ENCODE measurements at regions of chr17 and their contacts with region 1.

Region 1: DNA sequence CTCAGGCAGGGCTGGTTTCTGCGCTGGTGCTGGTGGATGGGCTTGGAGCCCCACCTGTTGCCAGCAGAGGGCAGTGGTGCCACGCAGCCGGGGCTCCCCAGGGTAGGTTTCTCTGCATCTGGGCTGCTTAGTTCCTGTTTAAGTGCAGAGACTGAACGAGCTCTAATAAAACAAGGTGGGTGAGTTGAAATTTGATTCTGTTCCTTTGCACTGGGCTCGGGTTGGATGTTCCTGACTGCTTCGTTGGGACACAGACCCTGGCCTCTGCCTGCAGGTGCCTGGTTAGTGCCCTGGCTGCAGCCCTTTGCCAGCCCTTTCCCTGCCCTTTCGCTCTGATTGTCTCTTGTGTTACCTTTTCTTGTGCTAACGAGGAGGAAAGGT is 30.0 kb downstream of the TBCD start:
- DNase-seq: peak; percentile 90
- H3K4me3 Mint-ChIP-seq: no peak overlapping the region
- H3K27ac Mint-ChIP-seq: no peak overlapping the region
- H3K4me1 Mint-ChIP-seq: peaks cover 12% of the 10 kb centered on the region
- H3K27me3 Mint-ChIP-seq: no peaks in the 10 kb centered on the region
- CTCF ChIP-seq: peak; percentile 92

Region 2: GRCh38 chr17:82568997-82569393 is 212.9 kb before region 1 on chr17:
- CTCF ChIA-PET with region 1: no interaction called
- intact Hi-C with region 1: no loop called
- DNase-seq: no peak
- H3K4me3 Mint-ChIP-seq: no peak overlapping the region
- H3K27ac Mint-ChIP-seq: no peak overlapping the region
- H3K4me1 Mint-ChIP-seq: peaks cover 17% of the 10 kb centered on the region
- H3K27me3 Mint-ChIP-seq: no peaks in the 10 kb centered on the region
- CTCF ChIP-seq: no peak

Region 3: DNA sequence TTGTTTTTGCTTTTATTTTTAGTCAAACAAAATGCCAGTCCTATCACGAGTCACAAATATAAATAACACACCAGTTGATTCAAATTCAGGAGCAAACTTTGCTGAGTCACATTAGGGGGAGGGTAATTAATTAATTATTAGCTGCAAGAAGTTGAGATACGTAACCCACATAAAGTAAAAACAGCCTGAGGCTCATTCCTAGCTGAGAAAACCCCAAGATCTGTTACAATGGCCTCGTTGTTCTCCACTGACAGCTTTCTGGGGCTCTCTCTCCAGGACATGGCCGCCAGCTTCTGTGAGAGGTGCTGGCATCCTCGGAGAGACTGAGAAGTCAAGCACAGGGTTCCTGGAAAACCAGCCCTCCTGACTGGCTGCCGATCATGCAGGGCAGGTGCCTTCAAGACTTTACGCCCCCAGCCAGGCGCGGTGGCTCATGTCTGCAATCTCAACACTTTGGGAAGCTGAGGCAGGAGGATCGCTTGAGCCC is 94.5 kb before region 1 on chr17:
- CTCF ChIA-PET with region 1: no interaction called
- intact Hi-C with region 1: no loop called
- DNase-seq: peak; percentile 76
- H3K4me3 Mint-ChIP-seq: peak overlapping the region; percentile 42
- H3K27ac Mint-ChIP-seq: peak overlapping the region; percentile 96
- H3K4me1 Mint-ChIP-seq: peaks cover 49% of the 10 kb centered on the region
- H3K27me3 Mint-ChIP-seq: no peaks in the 10 kb centered on the region
- CTCF ChIP-seq: no peak

Region 4: GRCh38 chr17:82888691-82889495 is 107.0 kb after region 1 on chr17:
- CTCF ChIA-PET with region 1: interaction called, 12 read pairs
- intact Hi-C with region 1: no loop called
- DNase-seq: peak; percentile 80
- H3K4me3 Mint-ChIP-seq: peak overlapping the region; percentile 55
- H3K27ac Mint-ChIP-seq: peak overlapping the region; percentile 95
- H3K4me1 Mint-ChIP-seq: peaks cover 49% of the 10 kb centered on the region
- H3K27me3 Mint-ChIP-seq: no peaks in the 10 kb centered on the region
- CTCF ChIP-seq: no peak

Region 5: DNA sequence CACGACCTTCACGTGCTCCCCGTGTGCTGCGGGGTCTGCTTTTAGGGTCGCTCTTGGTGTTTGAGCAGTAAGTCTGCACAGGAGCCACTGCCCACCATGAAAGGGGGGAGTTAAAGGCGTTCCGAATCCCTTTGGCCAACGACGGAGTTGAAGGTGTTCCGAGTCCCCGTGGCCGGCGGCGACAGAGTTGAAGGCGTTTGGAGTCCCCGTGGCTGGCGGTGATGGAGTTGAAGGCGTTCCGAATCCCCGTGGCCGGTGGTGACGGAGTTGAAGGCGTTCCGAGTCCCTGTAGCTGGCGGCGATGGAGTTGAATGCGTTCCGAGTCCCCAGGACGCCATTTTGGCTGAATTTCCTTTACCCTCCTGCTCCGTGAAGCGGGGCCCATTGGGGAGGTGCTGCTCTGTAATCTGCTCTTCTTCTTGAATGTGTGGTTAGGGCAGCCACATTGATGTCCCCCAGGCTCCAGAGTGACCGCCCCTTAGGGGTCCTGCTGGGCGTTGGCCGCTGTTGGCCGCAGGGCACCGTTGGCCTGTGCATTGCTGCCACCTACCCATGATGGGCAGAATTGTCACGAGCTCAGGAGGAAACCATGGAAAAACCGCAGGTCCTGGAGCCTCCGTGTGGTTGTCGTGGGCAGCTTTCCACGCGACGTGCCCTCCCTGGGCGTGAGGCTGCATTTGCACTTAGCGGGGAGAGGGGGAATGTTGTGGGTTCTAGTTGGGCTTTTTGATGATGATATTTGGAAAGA is 131.6 kb after region 1 on chr17:
- CTCF ChIA-PET with region 1: interaction called, 14 read pairs
- intact Hi-C with region 1: loop called (anchors 5 kb)
- DNase-seq: peak; percentile 32
- H3K4me3 Mint-ChIP-seq: no peak overlapping the region
- H3K27ac Mint-ChIP-seq: no peak overlapping the region
- H3K4me1 Mint-ChIP-seq: no peaks in the 10 kb centered on the region
- H3K27me3 Mint-ChIP-seq: no peaks in the 10 kb centered on the region
- CTCF ChIP-seq: peak; percentile 38